ENCODE measurements at regions of chr10 and their contacts with region 1.

Region 1: GRCh38 chr10:106392778-106393177 is 771.7 kb downstream of the SORCS1 start:
- DNase-seq: no peak
- H3K4me3 ChIP-seq: no peak overlapping the region
- H3K27ac ChIP-seq: no peak overlapping the region
- H3K27me3 ChIP-seq: peaks cover 0 to 4% (median 0%) of the 10 kb centered on the region in 45 donors
- CTCF ChIP-seq: no peak

Region 2: DNA sequence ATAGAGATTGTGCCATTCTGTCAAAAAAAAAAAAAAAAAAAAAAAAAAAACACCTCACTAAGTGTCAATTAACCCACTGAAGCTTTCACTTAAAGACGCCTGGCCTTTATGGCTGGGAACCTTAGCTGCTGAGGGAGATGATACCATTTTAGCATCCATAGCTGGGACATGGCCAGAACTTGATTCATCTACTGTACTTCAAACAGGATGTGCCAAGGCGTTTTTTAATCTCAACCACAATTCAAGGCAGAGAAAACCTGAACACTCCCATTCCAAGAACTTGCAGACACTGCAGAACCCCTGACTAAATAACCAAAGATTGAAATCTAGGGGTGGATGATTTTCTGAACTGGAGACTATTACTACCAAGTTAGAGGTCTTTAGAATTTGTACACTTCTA is 224.8 kb before region 1 on chr10:
- intact Hi-C with region 1: no loop called
- DNase-seq: no peak
- H3K4me3 ChIP-seq: no peak overlapping the region
- H3K27ac ChIP-seq: no peak overlapping the region
- H3K27me3 ChIP-seq: peaks cover 0 to 2% (median 0%) of the 10 kb centered on the region in 45 donors
- CTCF ChIP-seq: no peak

Region 3: GRCh38 chr10:106582291-106582690 is 189.5 kb after region 1 on chr10:
- intact Hi-C with region 1: loop called in 1 of 2 experiments (anchors 5 kb)
- DNase-seq: peak; percentile 5 to 84 (median 73)
- H3K4me3 ChIP-seq: peak overlapping the region in 13 of 59 donors; percentile 5 to 45 (median 23)
- H3K27ac ChIP-seq: peak overlapping the region in 52 of 59 donors; percentile 3 to 88 (median 69)
- H3K27me3 ChIP-seq: no peaks in the 10 kb centered on the region
- CTCF ChIP-seq: peak in 14 of 56 donors; percentile 8 to 26 (median 21)

Measured in dorsolateral prefrontal cortex (tissue), 120 donors.